Heart right ventricle (tissue), 16 donors: ENCODE measurements at regions of chr4 and their contacts with region 1.

Region 1: GRCh38 chr4:48779998-48780742 is at the start of gene FRYL:
- DNase-seq: peak; percentile 99 to 100
- ATAC-seq: peak; percentile 94 to 98 (median 96)
- H3K4me3 ChIP-seq: peak within 1 kb of the TSS; percentile 65 to 98 (median 96)
- H3K27ac ChIP-seq: peak within 1 kb of the TSS; percentile 87 to 99 (median 98)
- H3K4me1 ChIP-seq: peaks cover under 1 to 44% (median 32%) of the 10 kb centered on the region in 9 donors
- H3K27me3 ChIP-seq: no peaks in the 10 kb centered on the region
- CTCF ChIP-seq: no peak
- total RNA-seq, gene FRYL: 30.0 to 60.1 (median 37.7) TPM

Region 2: DNA sequence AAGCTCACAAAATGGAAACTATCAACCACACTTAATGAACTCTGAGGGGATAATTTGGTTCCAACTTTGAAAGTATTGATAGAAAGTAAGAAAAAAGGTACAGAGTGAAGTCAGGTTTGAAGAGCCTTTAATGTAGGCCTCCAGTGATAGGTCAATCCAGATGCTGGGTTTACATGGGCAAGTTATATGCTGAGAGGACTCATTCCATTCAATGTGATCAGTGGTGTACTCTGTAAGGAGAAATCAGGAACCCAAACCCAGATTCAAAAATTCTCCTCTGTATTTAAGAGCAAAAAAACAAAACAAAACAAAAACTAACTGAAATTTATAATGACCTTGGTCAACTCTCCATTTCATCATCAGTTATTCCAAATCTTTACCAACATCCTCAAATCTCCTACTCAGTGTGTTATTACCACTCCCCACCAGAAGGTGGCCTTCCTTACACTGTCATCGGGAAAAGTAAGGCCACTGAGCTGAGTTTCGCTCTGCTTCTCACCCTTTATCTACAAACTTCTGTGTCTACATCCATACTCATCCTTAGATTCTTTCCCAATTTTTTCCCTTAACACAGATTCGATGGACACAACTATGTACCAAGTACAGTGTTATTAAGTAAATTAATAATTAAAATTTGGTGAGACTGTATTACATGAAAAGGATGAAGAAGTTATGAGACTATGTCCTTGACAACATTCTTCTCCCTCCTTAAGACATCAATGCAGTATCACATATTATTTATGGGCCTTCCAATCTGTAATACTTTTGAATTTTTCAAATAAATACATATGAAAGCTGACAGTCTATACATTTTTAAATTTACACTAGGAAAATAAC is 201.8 kb before region 1 on chr4:
- intact Hi-C with region 1: loop called in 8 of 10 experiments (anchors 5 to 10 kb)
- DNase-seq: peak in 1 of 2 donors; percentile 66
- ATAC-seq: peak; percentile 74 to 94 (median 89)
- H3K4me3 ChIP-seq: no peak overlapping the region
- H3K27ac ChIP-seq: peak overlapping the region in 2 of 10 donors; percentile 8 to 11
- H3K4me1 ChIP-seq: peaks cover 0 to 4% (median 0%) of the 10 kb centered on the region in 9 donors
- H3K27me3 ChIP-seq: no peaks in the 10 kb centered on the region
- CTCF ChIP-seq: peak; percentile 59 to 96 (median 89)

Region 3: GRCh38 chr4:48594180-48594579 is 186.0 kb before region 1 on chr4:
- intact Hi-C with region 1: loop called in 4 of 10 experiments (anchors 10 kb)
- DNase-seq: peak; percentile 10 to 77
- ATAC-seq: peak; percentile 73 to 97 (median 94)
- H3K4me3 ChIP-seq: no peak overlapping the region
- H3K27ac ChIP-seq: peak overlapping the region in 5 of 10 donors; percentile 34 to 72 (median 59)
- H3K4me1 ChIP-seq: peaks cover 0 to 68% (median 16%) of the 10 kb centered on the region in 9 donors
- H3K27me3 ChIP-seq: no peaks in the 10 kb centered on the region
- CTCF ChIP-seq: no peak

Region 4: DNA sequence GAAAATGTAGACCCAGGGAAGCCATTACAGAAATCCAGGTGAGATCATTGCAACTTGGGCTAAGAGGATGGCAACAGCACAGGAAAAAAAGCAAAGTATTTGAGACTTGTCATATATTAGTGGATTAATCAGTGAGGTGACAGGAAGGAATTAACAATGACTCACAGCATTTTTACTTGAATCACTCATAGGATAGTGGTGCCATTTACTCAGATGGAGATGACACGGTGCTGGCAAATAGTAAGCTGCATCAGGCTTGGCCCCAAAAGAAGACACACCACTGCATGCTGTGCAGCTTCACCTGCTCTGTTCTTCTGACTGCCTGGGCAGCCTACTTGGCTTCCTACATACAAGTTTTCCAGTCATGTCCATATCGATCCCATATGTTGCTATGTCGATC is 144.9 kb before region 1 on chr4:
- intact Hi-C with region 1: no loop called
- DNase-seq: no peak
- ATAC-seq: peak in 3 of 8 donors; percentile 27 to 50 (median 28)
- H3K4me3 ChIP-seq: no peak overlapping the region
- H3K27ac ChIP-seq: peak overlapping the region in 2 of 10 donors; percentile 9 to 39
- H3K4me1 ChIP-seq: peaks cover 0 to 43% (median 27%) of the 10 kb centered on the region in 9 donors
- H3K27me3 ChIP-seq: no peaks in the 10 kb centered on the region
- CTCF ChIP-seq: no peak

Region 5: DNA sequence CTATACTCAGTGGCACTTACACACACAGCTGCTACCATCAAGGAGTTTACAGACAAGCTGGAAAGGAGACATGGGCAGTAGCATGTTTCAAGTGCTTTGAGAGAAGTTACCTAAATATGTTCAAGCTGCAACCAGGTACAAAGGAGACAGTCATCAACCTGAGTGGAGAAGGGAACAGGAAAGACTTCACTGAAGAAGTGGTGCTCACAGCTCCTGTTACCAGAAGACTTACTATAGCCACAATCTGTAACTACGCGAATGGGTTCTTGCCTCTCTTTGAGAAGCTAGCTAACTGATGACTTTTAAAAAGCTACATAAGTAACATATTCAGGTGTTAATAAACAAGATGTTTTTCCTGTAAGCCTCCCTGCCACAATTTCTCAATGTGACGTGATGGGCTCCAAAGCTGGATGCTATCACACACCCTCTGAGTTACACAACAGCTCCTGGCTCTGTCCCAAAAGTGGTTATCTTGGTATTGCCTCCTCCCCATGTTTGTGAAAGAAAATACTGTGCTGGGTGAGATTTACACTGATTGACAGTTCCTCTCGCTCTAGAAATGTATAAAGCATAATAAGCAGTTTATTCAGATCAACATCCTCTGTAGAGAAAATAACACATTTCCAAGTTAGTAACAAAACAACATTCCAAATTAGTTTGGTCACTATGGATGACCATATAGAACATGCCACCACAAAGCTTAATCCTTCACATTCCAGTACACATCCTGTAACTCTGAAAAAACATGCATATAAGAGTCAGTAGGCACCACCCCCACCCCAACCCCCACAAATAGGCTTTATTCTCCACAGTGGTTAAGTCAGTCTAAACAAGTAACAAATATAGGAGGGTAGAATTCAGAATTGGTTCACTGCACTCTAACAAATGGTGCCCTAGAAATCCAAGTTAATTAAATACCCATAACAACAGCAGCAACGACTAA is 81.9 kb before region 1 on chr4:
- intact Hi-C with region 1: loop called in 1 of 10 experiments (anchors 10 kb)
- DNase-seq: peak in 1 of 2 donors; percentile 63
- ATAC-seq: peak in 7 of 8 donors; percentile 69 to 94 (median 86)
- H3K4me3 ChIP-seq: no peak overlapping the region
- H3K27ac ChIP-seq: no peak overlapping the region
- H3K4me1 ChIP-seq: peaks cover 0 to 54% (median 25%) of the 10 kb centered on the region in 9 donors
- H3K27me3 ChIP-seq: no peaks in the 10 kb centered on the region
- CTCF ChIP-seq: no peak

Region 6: GRCh38 chr4:48801734-48802133 is 21.6 kb after region 1 on chr4:
- intact Hi-C with region 1: loop called in 1 of 10 experiments (anchors 2 kb)
- DNase-seq: peak in 1 of 2 donors; percentile 75
- ATAC-seq: peak; percentile 55 to 94 (median 84)
- H3K4me3 ChIP-seq: no peak overlapping the region
- H3K27ac ChIP-seq: peak overlapping the region in 9 of 10 donors; percentile 38 to 87 (median 69)
- H3K4me1 ChIP-seq: peaks cover 0 to 57% (median 20%) of the 10 kb centered on the region in 9 donors
- H3K27me3 ChIP-seq: no peaks in the 10 kb centered on the region
- CTCF ChIP-seq: no peak

Region 7: DNA sequence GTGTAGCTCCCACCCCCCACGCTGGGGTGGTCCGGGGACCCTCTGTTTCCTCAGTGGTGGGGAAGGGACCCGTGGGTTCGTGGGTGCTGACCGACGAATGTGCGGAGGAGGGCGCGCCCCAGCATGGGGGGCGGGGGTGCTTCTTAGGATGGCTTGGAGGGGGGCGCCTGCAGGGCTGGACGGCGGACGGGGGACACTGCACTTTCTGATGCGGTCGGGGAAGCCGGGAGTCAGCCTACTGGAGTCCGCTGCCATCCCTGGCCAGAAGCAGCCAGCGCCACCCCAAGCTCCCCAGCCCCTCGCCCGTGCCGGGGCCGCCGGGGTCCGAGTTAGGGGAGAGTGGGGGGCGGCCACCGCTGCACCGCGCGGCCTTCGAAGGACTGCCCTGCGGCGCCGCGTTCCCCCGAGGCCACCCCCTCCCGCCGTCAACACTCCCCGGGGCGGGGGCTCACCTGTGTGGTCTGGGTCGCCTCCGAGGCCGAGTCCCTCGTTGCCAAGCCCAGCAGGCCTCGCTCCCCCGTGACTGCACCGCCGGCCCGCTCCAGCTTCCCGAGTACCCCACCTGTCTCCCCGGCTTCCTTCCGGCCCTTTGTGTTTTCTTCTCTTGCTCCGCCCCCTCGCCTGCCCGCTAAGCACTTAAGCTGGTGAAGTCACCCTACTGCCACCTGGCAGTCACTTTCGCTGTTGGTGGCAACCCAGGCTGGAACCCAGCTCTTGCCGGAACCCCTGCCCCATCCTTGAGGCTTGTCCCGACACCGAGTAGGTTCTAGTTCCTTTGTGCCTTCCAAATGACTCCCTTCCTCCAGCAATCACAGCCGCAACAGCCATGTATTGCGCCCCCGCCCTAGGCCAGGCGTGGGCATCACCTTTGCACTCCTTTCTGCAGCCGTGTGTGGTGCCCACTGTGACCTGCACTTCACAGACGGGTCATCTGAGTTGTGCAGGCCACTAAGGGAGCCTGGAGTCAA is 126.3 kb after region 1 on chr4 and contains the start of gene OCIAD2:
- intact Hi-C with region 1: loop called in 1 of 10 experiments (anchors 5 kb)
- DNase-seq: peak; percentile 50 to 63
- ATAC-seq: peak; percentile 81 to 92 (median 88)
- H3K4me3 ChIP-seq: peak within 1 kb of the TSS; percentile 40 to 84 (median 70)
- H3K27ac ChIP-seq: peak within 1 kb of the TSS in 9 of 10 donors; percentile 46 to 80 (median 71)
- H3K4me1 ChIP-seq: peaks cover 0 to 19% (median 12%) of the 10 kb centered on the region in 9 donors
- H3K27me3 ChIP-seq: no peaks in the 10 kb centered on the region
- CTCF ChIP-seq: peak in 4 of 9 donors; percentile 25 to 46 (median 36)
- total RNA-seq, gene OCIAD2: 11.4 to 30.2 (median 14.8) TPM